B cell (primary cell): ENCODE measurements at regions of chr6 and their contacts with region 1.

Region 1: GRCh38 chr6:88238065-88238464 is 71.9 kb upstream of the CNR1 start:
- DNase-seq: peak; percentile 78
- ATAC-seq: peak; percentile 78
- H3K4me3 ChIP-seq: no peak overlapping the region
- H3K4me3 Mint-ChIP-seq: no peak overlapping the region
- H3K27ac ChIP-seq: no peak overlapping the region
- H3K27ac Mint-ChIP-seq: no peak overlapping the region
- H3K4me1 ChIP-seq: peaks cover 0 to 4% of the 10 kb centered on the region in 2 donors
- H3K4me1 Mint-ChIP-seq: peaks cover 7% of the 10 kb centered on the region
- H3K27me3 ChIP-seq: no peaks in the 10 kb centered on the region
- H3K27me3 Mint-ChIP-seq: no peaks in the 10 kb centered on the region
- CTCF ChIP-seq: peak; percentile 83

Region 2: GRCh38 chr6:87393022-87393622 is 844.9 kb before region 1 on chr6:
- CTCF ChIA-PET with region 1: interaction called, 12 read pairs
- POLR2A ChIA-PET with region 1: no interaction called
- intact Hi-C with region 1: loop called (anchors 1 kb)
- DNase-seq: peak; percentile 79
- ATAC-seq: peak; percentile 86
- H3K4me3 ChIP-seq: no peak overlapping the region
- H3K4me3 Mint-ChIP-seq: no peak overlapping the region
- H3K27ac ChIP-seq: no peak overlapping the region
- H3K27ac Mint-ChIP-seq: no peak overlapping the region
- H3K4me1 ChIP-seq: no peaks in the 10 kb centered on the region
- H3K4me1 Mint-ChIP-seq: peaks cover 5% of the 10 kb centered on the region
- H3K27me3 ChIP-seq: no peaks in the 10 kb centered on the region
- H3K27me3 Mint-ChIP-seq: no peaks in the 10 kb centered on the region
- CTCF ChIP-seq: peak; percentile 84

Region 3: DNA sequence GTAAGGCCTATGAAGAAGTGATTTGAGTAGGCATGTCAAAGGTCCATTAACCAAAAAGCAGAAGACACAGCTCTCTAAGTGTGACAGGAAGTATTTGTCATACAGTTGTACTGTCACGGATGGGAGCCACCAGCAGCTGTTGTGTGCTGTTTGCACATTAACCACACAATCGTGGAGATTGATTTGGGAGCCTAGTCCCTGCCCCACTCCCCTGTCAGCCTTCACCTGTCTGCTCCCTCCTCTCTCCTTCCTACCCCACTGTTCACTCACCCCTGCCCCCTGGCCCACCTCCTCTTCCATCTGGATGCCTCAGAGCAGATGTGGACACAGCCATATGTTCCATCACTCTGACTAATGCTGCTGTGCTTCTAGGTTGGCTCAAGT is 315.1 kb before region 1 on chr6:
- CTCF ChIA-PET with region 1: interaction called, 176 read pairs
- POLR2A ChIA-PET with region 1: no interaction called
- intact Hi-C with region 1: no loop called
- DNase-seq: peak; percentile 86
- ATAC-seq: peak; percentile 77
- H3K4me3 ChIP-seq: no peak overlapping the region
- H3K4me3 Mint-ChIP-seq: peak overlapping the region; percentile 63
- H3K27ac ChIP-seq: peak overlapping the region; percentile 63 to 91
- H3K27ac Mint-ChIP-seq: peak overlapping the region; percentile 92
- H3K4me1 ChIP-seq: peaks cover 90% of the 10 kb centered on the region in 2 donors
- H3K4me1 Mint-ChIP-seq: peaks cover 91% of the 10 kb centered on the region
- H3K27me3 ChIP-seq: no peaks in the 10 kb centered on the region
- H3K27me3 Mint-ChIP-seq: no peaks in the 10 kb centered on the region
- CTCF ChIP-seq: no peak

Region 4: DNA sequence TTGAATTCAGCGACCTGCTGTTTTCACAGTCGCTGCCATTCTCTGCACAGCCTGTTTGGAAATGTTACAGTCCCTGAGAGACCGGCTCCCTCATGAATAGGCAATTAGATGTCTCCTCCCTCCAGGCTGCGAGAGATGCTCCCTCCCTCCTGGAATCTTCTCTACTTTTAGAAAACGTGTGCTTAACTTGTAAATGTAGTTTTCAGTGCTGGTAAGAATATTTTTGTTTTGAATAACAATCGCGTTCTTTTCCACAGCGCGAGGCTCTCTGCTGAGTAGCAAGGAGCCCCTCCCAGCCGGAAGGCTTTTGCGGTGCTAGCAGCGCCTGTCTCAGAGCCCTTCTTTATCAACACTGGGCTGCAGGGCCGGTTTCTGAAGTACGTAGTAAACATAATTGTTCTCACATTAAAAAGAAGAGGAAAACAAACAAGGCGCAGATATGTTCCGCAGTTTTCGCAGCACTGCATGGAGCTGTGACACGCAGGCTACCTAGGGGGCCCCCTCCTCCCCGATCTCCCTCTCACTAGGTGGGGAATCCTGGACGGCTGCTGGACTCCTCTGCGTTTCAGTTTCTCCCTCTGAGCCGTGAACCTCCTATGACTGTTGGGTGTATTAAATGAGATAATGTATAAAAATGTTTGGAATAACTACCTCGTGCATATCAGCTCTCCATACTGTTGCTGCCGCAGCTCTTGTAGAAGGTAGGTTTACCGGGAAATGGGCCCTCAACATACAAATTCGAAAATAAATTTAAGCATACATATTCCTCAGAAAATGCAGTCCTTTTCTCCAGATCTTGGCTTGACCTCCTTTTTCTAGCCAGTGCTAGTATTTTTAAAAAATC is 269.4 kb before region 1 on chr6:
- CTCF ChIA-PET with region 1: no interaction called
- POLR2A ChIA-PET with region 1: no interaction called
- intact Hi-C with region 1: no loop called
- DNase-seq: peak; percentile 34
- ATAC-seq: peak; percentile 41
- H3K4me3 ChIP-seq: peak overlapping the region; percentile 18 to 75 (median 47)
- H3K4me3 Mint-ChIP-seq: no peak overlapping the region
- H3K27ac ChIP-seq: no peak overlapping the region
- H3K27ac Mint-ChIP-seq: no peak overlapping the region
- H3K4me1 ChIP-seq: peaks cover 9 to 12% of the 10 kb centered on the region in 2 donors
- H3K4me1 Mint-ChIP-seq: no peaks in the 10 kb centered on the region
- H3K27me3 ChIP-seq: peaks cover 0 to 28% (median 17%) of the 10 kb centered on the region in 4 experiments
- H3K27me3 Mint-ChIP-seq: peaks cover 3% of the 10 kb centered on the region
- CTCF ChIP-seq: no peak

Region 5: GRCh38 chr6:88165844-88166492 is 72.1 kb before region 1 on chr6 and contains the start of gene CNR1:
- CTCF ChIA-PET with region 1: interaction called, 12 read pairs
- POLR2A ChIA-PET with region 1: no interaction called
- intact Hi-C with region 1: loop called (anchors 1 kb)
- DNase-seq: no peak
- ATAC-seq: peak; percentile 59
- H3K4me3 ChIP-seq: peak within 1 kb of the TSS; percentile 32 to 82 (median 75)
- H3K4me3 Mint-ChIP-seq: peak within 1 kb of the TSS; percentile 98
- H3K27ac ChIP-seq: peak within 1 kb of the TSS; percentile 67 to 89
- H3K27ac Mint-ChIP-seq: peak within 1 kb of the TSS; percentile 98
- H3K4me1 ChIP-seq: peaks cover 21 to 30% of the 10 kb centered on the region in 2 donors
- H3K4me1 Mint-ChIP-seq: peaks cover 33% of the 10 kb centered on the region
- H3K27me3 ChIP-seq: peaks cover 0 to 18% (median 5%) of the 10 kb centered on the region in 4 experiments
- H3K27me3 Mint-ChIP-seq: peaks cover 15% of the 10 kb centered on the region
- CTCF ChIP-seq: no peak
- total RNA-seq, gene CNR1: 20.4 and 28.9 TPM in 2 replicates

Region 6: GRCh38 chr6:88388589-88388988 is 150.5 kb after region 1 on chr6:
- CTCF ChIA-PET with region 1: no interaction called
- POLR2A ChIA-PET with region 1: no interaction called
- intact Hi-C with region 1: no loop called
- DNase-seq: no peak
- ATAC-seq: no peak
- H3K4me3 ChIP-seq: no peak overlapping the region
- H3K4me3 Mint-ChIP-seq: no peak overlapping the region
- H3K27ac ChIP-seq: no peak overlapping the region
- H3K27ac Mint-ChIP-seq: no peak overlapping the region
- H3K4me1 ChIP-seq: no peaks in the 10 kb centered on the region
- H3K4me1 Mint-ChIP-seq: no peaks in the 10 kb centered on the region
- H3K27me3 ChIP-seq: peaks cover 0 to 3% (median 0%) of the 10 kb centered on the region in 4 experiments
- H3K27me3 Mint-ChIP-seq: peaks cover 16% of the 10 kb centered on the region
- CTCF ChIP-seq: no peak

Region 7: DNA sequence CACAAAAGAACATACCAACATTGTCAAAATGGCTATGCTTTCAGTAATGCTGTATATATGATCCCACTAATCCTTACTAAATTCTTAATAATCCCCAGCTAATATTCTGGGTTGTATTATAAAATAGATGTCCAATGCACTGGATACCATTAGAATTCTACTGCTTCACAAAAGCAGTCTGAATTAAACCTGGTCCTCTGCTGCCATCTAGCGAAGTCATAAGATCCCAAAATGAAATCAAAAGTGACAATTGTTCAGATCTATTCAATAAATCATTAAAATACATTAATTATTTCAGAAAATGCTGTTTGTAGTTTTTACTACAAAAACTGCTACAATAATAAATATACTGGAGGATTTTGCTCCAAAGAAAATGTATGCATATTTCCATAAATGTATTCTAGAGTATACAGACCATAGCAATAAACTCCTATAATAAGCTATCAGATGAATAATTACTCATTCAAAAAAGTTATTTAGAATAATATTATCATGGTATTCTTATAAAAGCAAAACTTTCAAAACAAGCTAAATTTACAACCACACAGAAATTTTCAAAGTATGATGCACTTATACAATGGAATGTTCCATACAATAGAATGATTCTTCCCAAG is 632.8 kb after region 1 on chr6:
- CTCF ChIA-PET with region 1: interaction called, 11 read pairs
- POLR2A ChIA-PET with region 1: no interaction called
- intact Hi-C with region 1: loop called (anchors 2 kb)
- DNase-seq: peak; percentile 72
- ATAC-seq: no peak
- H3K4me3 ChIP-seq: no peak overlapping the region
- H3K4me3 Mint-ChIP-seq: no peak overlapping the region
- H3K27ac ChIP-seq: no peak overlapping the region
- H3K27ac Mint-ChIP-seq: no peak overlapping the region
- H3K4me1 ChIP-seq: peaks cover 0 to 4% of the 10 kb centered on the region in 2 donors
- H3K4me1 Mint-ChIP-seq: peaks cover 5% of the 10 kb centered on the region
- H3K27me3 ChIP-seq: no peaks in the 10 kb centered on the region
- H3K27me3 Mint-ChIP-seq: no peaks in the 10 kb centered on the region
- CTCF ChIP-seq: peak; percentile 94